Naive thymus-derived CD4-positive, alpha-beta T cell (primary cell): ENCODE measurements at regions of chr10 and their contacts with region 1.

Region 1: DNA sequence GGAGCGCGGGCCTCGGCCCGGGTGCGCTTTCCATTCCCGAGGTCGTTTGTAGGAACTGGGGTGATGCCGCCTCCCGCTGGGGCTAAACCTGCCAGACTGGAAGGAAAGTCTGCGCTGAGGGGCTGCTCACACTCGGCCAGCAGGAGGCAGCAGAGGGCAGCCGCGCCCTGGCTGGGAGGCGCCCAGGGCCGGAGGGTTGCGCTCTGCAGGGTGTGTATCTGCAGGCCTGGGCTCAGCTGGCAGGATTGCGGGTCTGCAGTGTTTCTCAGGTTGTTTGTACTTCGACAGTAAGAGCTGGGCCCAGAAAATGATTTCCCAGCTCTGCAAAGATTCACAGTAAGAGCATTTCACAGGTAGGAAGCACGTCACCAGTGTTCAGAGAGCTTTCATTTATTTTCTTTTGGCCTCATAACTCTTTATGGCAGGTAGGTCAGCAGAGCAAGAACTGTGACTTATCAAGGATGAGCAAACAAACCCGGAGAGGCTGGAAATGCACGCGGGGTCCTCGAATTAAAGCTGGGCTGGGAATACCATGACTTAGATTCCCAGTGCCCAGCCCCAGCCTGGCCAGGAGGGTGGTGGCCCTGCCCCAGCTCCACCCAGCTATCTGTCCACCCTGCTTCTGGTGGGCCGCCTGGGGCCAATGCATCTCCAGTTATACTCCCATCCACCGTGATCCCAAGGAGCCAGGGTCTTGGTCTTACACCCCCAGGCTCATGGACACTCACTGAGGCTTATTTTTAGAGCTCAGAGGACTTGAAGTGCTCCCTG is 15.2 kb upstream of the PPP2R2D start:
- DNase-seq: peak; percentile 65 to 93 (median 85)
- ATAC-seq: peak; percentile 99
- H3K4me3 ChIP-seq: no peak overlapping the region
- H3K4me3 Mint-ChIP-seq: peak overlapping the region in 4 of 10 donors; percentile 30 to 36 (median 31)
- H3K27ac ChIP-seq: no peak overlapping the region
- H3K27ac Mint-ChIP-seq: peak overlapping the region in 4 of 9 donors; percentile 3 to 71 (median 35)
- H3K4me1 ChIP-seq: peaks cover 0 to 15% of the 10 kb centered on the region in 2 donors
- H3K4me1 Mint-ChIP-seq: peaks cover 0 to 14% (median 10%) of the 10 kb centered on the region in 7 donors
- H3K27me3 ChIP-seq: no peaks in the 10 kb centered on the region
- H3K27me3 Mint-ChIP-seq: peaks cover 0 to 12% (median 0%) of the 10 kb centered on the region in 5 donors

Region 2: GRCh38 chr10:131900350-131901146 is 15.0 kb after region 1 on chr10 and contains the start of gene PPP2R2D:
- CTCF ChIA-PET with region 1: interaction called, 7 read pairs
- POLR2A ChIA-PET with region 1: interaction called, 3 read pairs
- intact Hi-C with region 1: loop called in 1 of 2 experiments (anchors 1 kb)
- DNase-seq: peak; percentile 95 to 99 (median 97)
- ATAC-seq: peak; percentile 90
- H3K4me3 ChIP-seq: peak within 1 kb of the TSS; percentile 64
- H3K4me3 Mint-ChIP-seq: peak within 1 kb of the TSS; percentile 90 to 95 (median 92)
- H3K27ac ChIP-seq: peak within 1 kb of the TSS; percentile 94
- H3K27ac Mint-ChIP-seq: peak within 1 kb of the TSS; percentile 86 to 97 (median 93)
- H3K4me1 ChIP-seq: peaks cover 34 to 40% of the 10 kb centered on the region in 2 donors
- H3K4me1 Mint-ChIP-seq: peaks cover 30 to 67% (median 61%) of the 10 kb centered on the region in 7 donors
- H3K27me3 ChIP-seq: no peaks in the 10 kb centered on the region
- H3K27me3 Mint-ChIP-seq: peaks cover 0 to 18% (median 0%) of the 10 kb centered on the region in 5 donors
- total RNA-seq, gene PPP2R2D: 37.1 to 61.3 (median 40.1) TPM

Region 3: GRCh38 chr10:131909014-131909808 is 23.6 kb after region 1 on chr10:
- CTCF ChIA-PET with region 1: interaction called, 7 read pairs
- POLR2A ChIA-PET with region 1: interaction called, 3 read pairs
- intact Hi-C with region 1: loop called in 1 of 2 experiments (anchors 1 kb)
- DNase-seq: peak in 1 of 9 donors; percentile 6
- ATAC-seq: no peak
- H3K4me3 ChIP-seq: peak overlapping the region; percentile 25
- H3K4me3 Mint-ChIP-seq: peak overlapping the region; percentile 6 to 92 (median 84)
- H3K27ac ChIP-seq: peak overlapping the region; percentile 70
- H3K27ac Mint-ChIP-seq: peak overlapping the region; percentile 72 to 98 (median 92)
- H3K4me1 ChIP-seq: peaks cover 37 to 76% of the 10 kb centered on the region in 2 donors
- H3K4me1 Mint-ChIP-seq: peaks cover 62 to 98% (median 92%) of the 10 kb centered on the region in 7 donors
- H3K27me3 ChIP-seq: no peaks in the 10 kb centered on the region
- H3K27me3 Mint-ChIP-seq: no peaks in the 10 kb centered on the region

Region 4: DNA sequence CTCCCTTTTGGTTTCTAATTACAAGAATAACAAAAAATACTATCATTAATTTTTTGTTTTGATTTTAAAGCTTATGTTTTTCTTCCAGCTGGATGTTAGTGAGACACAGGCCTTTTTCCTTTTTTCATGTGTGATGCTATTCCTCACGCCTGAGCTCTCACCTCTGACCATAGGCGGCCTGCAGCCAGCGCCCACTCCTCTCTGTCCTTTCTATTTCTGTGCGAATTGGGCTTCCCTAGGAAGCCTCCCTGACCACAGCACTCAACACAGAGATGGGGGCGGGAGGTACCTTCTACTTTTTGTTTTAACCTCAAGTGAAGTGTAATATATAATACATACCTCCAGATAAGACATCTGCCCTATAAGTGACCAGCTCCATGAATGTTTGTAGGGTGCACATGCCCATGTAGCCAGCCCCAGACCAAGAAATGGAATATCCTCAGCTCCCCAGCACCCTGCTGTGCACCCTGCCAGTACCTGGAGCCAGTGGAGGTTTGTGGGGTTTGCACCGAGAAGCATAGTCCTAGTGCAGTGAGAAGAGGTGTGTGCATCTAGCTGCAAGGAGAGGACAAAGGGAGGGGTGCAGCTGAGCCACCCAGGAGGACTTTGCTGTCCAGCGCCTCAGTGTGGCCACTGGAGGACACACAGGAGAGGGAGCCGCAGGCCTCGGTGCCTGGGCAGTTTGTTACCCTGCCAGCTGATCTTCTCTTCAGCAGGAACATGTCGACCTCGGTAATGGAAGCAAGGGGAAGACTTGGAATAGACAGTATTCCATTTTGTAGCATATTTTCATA is 57.6 kb after region 1 on chr10:
- CTCF ChIA-PET with region 1: interaction called, 7 read pairs
- POLR2A ChIA-PET with region 1: no interaction called
- intact Hi-C with region 1: loop called in 1 of 2 experiments (anchors 1 kb)
- DNase-seq: peak in 5 of 9 donors; percentile 11 to 29 (median 20)
- ATAC-seq: peak; percentile 63
- H3K4me3 ChIP-seq: no peak overlapping the region
- H3K4me3 Mint-ChIP-seq: no peak overlapping the region
- H3K27ac ChIP-seq: no peak overlapping the region
- H3K27ac Mint-ChIP-seq: peak overlapping the region in 8 of 9 donors; percentile 23 to 74 (median 68)
- H3K4me1 ChIP-seq: no peaks in the 10 kb centered on the region
- H3K4me1 Mint-ChIP-seq: peaks cover 0 to 21% (median 14%) of the 10 kb centered on the region in 7 donors
- H3K27me3 ChIP-seq: no peaks in the 10 kb centered on the region
- H3K27me3 Mint-ChIP-seq: no peaks in the 10 kb centered on the region

Region 5: DNA sequence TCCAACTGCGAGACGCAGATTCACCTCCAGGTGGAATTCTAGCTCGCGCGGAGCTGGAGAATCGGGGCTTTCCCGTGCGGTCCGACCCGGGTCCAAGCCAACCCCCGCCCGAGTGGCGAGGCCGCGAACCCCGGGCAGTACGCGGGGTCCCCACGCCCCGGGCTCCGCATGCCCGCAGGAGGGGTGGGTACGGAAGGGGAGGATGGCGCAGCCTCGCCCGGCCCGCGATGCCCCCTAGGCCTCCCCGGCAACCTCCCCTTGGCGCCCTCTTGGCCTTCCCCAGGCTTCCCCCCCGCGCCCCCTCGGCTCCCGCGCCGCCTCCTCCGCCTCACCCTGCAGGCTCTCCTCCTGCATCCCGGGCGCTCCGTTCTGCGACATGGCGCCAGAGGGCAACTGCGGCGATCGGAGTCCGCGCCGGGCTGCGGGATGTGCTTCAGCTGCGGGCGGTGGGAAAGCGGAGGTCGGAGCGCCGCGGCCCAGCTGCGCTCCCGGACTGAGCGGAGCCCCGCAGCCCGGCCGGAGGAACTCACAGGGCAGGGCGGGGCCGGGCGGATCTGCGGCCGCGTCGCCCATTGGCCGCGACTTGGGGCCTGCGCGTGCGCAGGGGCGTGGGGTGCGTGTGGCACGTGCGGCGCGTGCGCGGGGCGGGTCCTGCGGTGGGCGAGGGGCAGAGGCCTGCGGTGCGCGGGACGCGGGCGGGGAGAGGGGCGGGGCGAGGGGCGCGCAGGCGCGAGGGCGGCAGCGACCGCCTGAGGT is 96.0 kb after region 1 on chr10 and contains the start of gene BNIP3:
- CTCF ChIA-PET with region 1: interaction called, 3 read pairs
- POLR2A ChIA-PET with region 1: no interaction called
- intact Hi-C with region 1: loop called in 1 of 2 experiments (anchors 5 kb)
- DNase-seq: peak; percentile 92 to 99 (median 93)
- ATAC-seq: peak; percentile 96
- H3K4me3 ChIP-seq: peak within 1 kb of the TSS; percentile 79
- H3K4me3 Mint-ChIP-seq: peak within 1 kb of the TSS; percentile 81 to 93 (median 88)
- H3K27ac ChIP-seq: peak within 1 kb of the TSS; percentile 79
- H3K27ac Mint-ChIP-seq: peak within 1 kb of the TSS; percentile 66 to 89 (median 84)
- H3K4me1 ChIP-seq: peaks cover 7 to 22% of the 10 kb centered on the region in 2 donors
- H3K4me1 Mint-ChIP-seq: peaks cover 23 to 49% (median 42%) of the 10 kb centered on the region in 7 donors
- H3K27me3 ChIP-seq: no peaks in the 10 kb centered on the region
- H3K27me3 Mint-ChIP-seq: peaks cover 0 to 18% (median 0%) of the 10 kb centered on the region in 5 donors
- total RNA-seq, gene BNIP3: 17.7 to 81.7 (median 39.3) TPM

Region 6: DNA sequence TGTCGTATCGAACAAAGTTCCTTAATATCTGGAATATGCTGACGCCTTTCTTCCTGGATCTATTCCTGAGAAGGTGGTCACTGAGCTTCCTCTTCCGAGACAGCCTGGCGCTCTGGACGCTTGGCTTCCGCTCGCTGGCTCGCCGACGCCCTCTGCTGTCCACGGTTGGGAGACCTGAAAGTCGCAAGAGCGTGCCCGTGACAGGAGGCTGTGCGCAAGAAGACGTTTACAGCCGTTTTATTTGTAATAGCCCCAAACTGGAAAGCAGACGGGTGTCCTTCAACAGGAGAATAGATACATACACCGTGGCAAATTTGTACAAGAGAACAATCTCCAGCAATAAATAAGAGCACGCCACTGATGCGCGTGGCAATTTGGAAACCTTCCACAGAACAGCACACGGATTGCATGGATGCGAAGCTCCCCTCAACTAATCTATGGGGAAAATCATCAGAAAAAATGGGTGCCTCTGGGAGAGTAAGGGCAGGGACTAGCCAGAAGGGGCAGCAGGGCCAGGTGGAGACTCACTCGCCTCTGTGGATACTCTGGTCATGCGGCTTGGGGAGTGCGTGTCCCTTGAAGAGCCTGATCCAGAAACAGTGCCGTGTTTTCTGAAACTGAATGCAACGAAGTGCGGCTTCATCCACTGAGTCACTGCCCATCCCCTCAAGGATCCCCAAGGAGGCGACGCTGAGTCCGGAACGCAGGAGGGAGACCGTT is 137.7 kb after region 1 on chr10:
- CTCF ChIA-PET with region 1: interaction called, 107 read pairs
- POLR2A ChIA-PET with region 1: no interaction called
- intact Hi-C with region 1: loop called (anchors 1 kb)
- DNase-seq: peak; percentile 47 to 79 (median 70)
- ATAC-seq: peak; percentile 86
- H3K4me3 ChIP-seq: no peak overlapping the region
- H3K4me3 Mint-ChIP-seq: peak overlapping the region; percentile 14 to 75 (median 66)
- H3K27ac ChIP-seq: no peak overlapping the region
- H3K27ac Mint-ChIP-seq: peak overlapping the region in 3 of 9 donors; percentile 3 to 52 (median 8)
- H3K4me1 ChIP-seq: peaks cover 0 to 6% of the 10 kb centered on the region in 2 donors
- H3K4me1 Mint-ChIP-seq: peaks cover 5 to 16% (median 7%) of the 10 kb centered on the region in 7 donors
- H3K27me3 ChIP-seq: no peaks in the 10 kb centered on the region
- H3K27me3 Mint-ChIP-seq: peaks cover 31 to 49% (median 36%) of the 10 kb centered on the region in 5 donors

Region 7: DNA sequence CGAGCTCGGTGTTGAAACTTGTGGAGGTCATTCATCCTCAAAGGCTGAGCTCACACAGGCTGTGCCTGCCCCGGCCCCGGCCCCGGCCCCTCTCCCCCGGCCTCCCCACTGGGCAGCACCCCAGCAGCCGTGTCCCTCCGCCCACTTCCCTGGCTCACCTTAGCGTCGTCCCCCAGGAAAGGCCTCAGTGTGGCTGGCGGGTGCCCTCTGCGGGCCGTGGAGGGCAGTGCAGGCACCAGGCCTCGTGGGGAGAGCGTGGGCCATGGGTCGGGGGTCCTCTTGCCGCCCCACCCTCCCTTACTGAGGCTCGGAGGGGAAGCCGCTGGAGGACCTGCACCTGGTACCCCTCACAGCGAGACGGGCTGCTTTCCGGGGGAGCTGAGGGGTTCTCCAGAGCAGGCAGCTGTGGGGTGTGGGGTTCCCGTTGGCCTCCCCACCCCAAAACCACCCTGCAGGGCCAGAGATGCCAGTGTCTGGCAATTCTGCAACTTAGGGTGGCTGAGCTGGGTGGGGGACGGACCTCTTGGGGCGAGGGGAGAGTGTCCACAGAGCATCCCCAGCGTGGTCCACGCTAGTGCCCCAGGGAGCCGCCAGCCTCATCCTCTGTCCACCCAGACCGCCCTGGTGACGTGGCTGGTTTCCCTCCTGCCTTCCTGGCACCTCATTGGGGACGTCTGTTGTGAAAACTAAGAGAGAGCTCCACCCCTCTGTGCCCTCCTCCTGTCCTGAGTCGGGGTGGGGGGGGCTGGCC is 257.0 kb after region 1 on chr10:
- CTCF ChIA-PET with region 1: no interaction called
- POLR2A ChIA-PET with region 1: no interaction called
- intact Hi-C with region 1: loop called (anchors 1 kb)
- DNase-seq: peak in 8 of 9 donors; percentile 31 to 64 (median 48)
- ATAC-seq: peak; percentile 81
- H3K4me3 ChIP-seq: no peak overlapping the region
- H3K4me3 Mint-ChIP-seq: no peak overlapping the region
- H3K27ac ChIP-seq: no peak overlapping the region
- H3K27ac Mint-ChIP-seq: no peak overlapping the region
- H3K4me1 ChIP-seq: no peaks in the 10 kb centered on the region
- H3K4me1 Mint-ChIP-seq: no peaks in the 10 kb centered on the region
- H3K27me3 ChIP-seq: no peaks in the 10 kb centered on the region
- H3K27me3 Mint-ChIP-seq: peaks cover 0 to 5% (median 0%) of the 10 kb centered on the region in 5 donors